ENCODE measurements at regions of chr10 and their contacts with region 1.

Region 1: GRCh38 chr10:63711867-63712716 is 190.9 kb downstream of the REEP3 start:
- DNase-seq: peak; percentile 99
- ATAC-seq: peak; percentile 91
- H3K4me3 ChIP-seq: 0 out of 4 replicates have a peak overlapping the region, but pooled peaks of 1 of the 2 experiments have one; percentile 5
- H3K27ac ChIP-seq: peak overlapping the region; percentile 75
- H3K4me1 ChIP-seq: peaks cover 59 to 75% of the 10 kb centered on the region in 2 experiments
- H3K27me3 ChIP-seq: no peaks in the 10 kb centered on the region
- CTCF ChIP-seq: no peak
- POLR2A ChIP-seq: no peak
- RAD21 ChIP-seq: peak; percentile 36

Region 2: GRCh38 chr10:63166742-63167258 is 545.3 kb before region 1 on chr10:
- CTCF ChIA-PET with region 1: interaction called, 159 read pairs
- POLR2A ChIA-PET with region 1: no interaction called
- RAD21 ChIA-PET with region 1: no interaction called
- intact Hi-C with region 1: no loop called
- DNase-seq: peak; percentile 64
- ATAC-seq: peak; percentile 86
- H3K4me3 ChIP-seq: no peak overlapping the region
- H3K27ac ChIP-seq: no peak overlapping the region
- H3K4me1 ChIP-seq: no peaks in the 10 kb centered on the region
- H3K27me3 ChIP-seq: no peaks in the 10 kb centered on the region
- CTCF ChIP-seq: peak; percentile 71 to 74 (median 74)
- POLR2A ChIP-seq: no peak
- RAD21 ChIP-seq: peak; percentile 79

Region 3: GRCh38 chr10:63217120-63217605 is 494.9 kb before region 1 on chr10:
- CTCF ChIA-PET with region 1: no interaction called
- POLR2A ChIA-PET with region 1: no interaction called
- RAD21 ChIA-PET with region 1: no interaction called
- intact Hi-C with region 1: loop called (anchors 2 kb)
- DNase-seq: peak; percentile 27
- ATAC-seq: peak; percentile 94
- H3K4me3 ChIP-seq: no peak overlapping the region
- H3K27ac ChIP-seq: no peak overlapping the region
- H3K4me1 ChIP-seq: 0 out of 4 replicates have a peak, but pooled peaks cover 0 to 4% of the 10 kb centered on the region in 2 experiments
- H3K27me3 ChIP-seq: no peaks in the 10 kb centered on the region
- CTCF ChIP-seq: peak; percentile 53 to 69 (median 67)
- POLR2A ChIP-seq: no peak
- RAD21 ChIP-seq: peak; percentile 78

Region 4: DNA sequence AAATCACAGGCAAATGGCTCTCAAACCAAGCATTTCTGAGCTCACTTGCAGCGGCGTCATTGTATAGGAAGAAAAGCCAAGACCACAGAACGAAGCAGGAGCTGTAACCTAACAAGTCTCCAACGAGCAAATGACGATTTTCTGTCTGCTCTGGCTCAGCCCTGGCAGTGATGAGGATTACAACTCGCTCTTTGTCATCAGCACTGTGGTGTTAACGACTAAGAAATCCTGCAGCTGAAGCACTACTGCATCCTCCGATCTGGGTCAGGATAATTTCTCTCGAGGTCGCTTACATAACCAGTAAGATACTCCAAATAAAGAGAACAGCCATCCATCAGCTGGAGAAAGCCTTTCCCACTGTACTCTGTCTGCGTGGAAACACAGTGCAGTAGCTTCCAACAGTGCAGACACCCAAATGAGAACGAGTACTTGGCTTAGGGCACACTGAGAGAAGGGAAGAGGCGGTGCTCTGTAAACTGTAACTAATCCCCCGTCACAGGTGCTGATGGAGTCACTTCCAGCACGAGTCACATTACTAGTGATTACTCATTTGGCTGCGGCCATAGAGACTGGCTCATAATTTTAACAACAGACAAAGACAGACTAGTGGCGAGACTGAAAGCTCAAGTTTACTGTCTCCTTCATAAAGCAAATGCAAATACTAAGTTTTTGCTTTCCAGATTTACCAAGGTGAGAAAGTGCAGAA is 443.1 kb before region 1 on chr10:
- CTCF ChIA-PET with region 1: no interaction called
- POLR2A ChIA-PET with region 1: interaction called, 3 read pairs
- RAD21 ChIA-PET with region 1: no interaction called
- intact Hi-C with region 1: loop called (anchors 5 kb)
- DNase-seq: peak; percentile 94
- ATAC-seq: peak; percentile 93
- H3K4me3 ChIP-seq: peak overlapping the region; percentile 60 to 65
- H3K27ac ChIP-seq: peak overlapping the region; percentile 72
- H3K4me1 ChIP-seq: peaks cover 28 to 57% of the 10 kb centered on the region in 2 experiments
- H3K27me3 ChIP-seq: no peaks in the 10 kb centered on the region
- CTCF ChIP-seq: peak in 2 of 3 experiments; percentile 25 to 36; a peak in 3 of 6 replicates
- POLR2A ChIP-seq: peak; percentile 90
- RAD21 ChIP-seq: peak; percentile 33

Region 5: DNA sequence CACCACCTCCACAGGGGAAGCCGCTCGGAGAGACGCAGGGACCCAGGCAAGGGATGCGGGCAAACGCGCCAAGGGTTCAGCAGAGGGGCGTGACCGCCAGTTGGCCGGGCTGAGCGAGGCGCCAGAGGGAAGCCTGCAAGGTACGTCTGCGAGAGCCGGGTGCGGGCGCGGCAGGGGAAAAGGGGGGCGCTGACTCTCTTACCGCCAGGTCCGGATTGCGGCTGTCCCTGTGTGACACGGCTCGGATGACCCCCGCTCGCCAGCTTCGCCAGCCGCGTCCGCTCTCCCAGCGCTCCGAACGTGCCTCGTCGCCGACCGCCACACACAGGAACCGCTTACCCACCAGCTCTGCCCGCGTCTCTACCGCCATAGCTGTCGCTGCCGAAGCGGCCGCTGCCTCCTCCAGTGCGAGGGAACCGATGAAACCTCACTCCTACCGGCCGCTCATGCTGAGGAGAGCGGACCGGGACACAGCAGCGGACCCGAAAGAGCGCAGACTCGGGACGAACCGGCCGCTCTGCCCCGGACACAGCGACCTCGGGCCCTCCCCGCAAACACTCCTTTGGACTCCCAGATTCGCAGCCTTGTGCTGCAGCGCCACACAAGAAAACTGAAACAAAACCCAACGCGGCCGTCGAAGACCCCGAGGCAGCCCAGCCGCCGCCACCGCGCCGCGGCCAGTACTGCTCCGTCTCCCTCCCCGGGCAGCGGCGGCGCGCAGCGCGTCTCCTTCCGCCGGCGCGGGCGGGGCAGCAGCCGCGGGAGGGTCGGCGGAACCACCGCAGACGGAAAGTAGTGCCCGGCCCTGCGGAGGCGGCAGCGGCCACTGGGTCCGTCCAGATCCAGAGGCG is 246.6 kb before region 1 on chr10 and contains the start of gene JMJD1C:
- CTCF ChIA-PET with region 1: no interaction called
- POLR2A ChIA-PET with region 1: no interaction called
- RAD21 ChIA-PET with region 1: no interaction called
- intact Hi-C with region 1: loop called (anchors 10 kb)
- DNase-seq: peak; percentile 72
- ATAC-seq: peak; percentile 82
- H3K4me3 ChIP-seq: peak within 1 kb of the TSS; percentile 78 to 88
- H3K27ac ChIP-seq: peak within 1 kb of the TSS; percentile 79
- H3K4me1 ChIP-seq: peaks cover 10 to 24% of the 10 kb centered on the region in 2 experiments; a peak in 3 of 4 replicates
- H3K27me3 ChIP-seq: no peaks in the 10 kb centered on the region
- CTCF ChIP-seq: no peak
- POLR2A ChIP-seq: peak; percentile 30
- RAD21 ChIP-seq: peak; percentile 26; the same call in 1 of the 2 replicates
- total RNA-seq, gene JMJD1C: 66.3 TPM

Region 6: GRCh38 chr10:63554657-63555056 is 157.4 kb before region 1 on chr10:
- CTCF ChIA-PET with region 1: no interaction called
- POLR2A ChIA-PET with region 1: no interaction called
- RAD21 ChIA-PET with region 1: no interaction called
- intact Hi-C with region 1: loop called (anchors 10 kb)
- DNase-seq: peak; percentile 26
- ATAC-seq: peak; percentile 48
- H3K4me3 ChIP-seq: peak overlapping the region in 1 of 2 experiments; percentile 40; a peak in 2 of 4 replicates
- H3K27ac ChIP-seq: peak overlapping the region; percentile 84
- H3K4me1 ChIP-seq: peaks cover 41 to 53% of the 10 kb centered on the region in 2 experiments
- H3K27me3 ChIP-seq: no peaks in the 10 kb centered on the region
- CTCF ChIP-seq: no peak
- POLR2A ChIP-seq: no peak
- RAD21 ChIP-seq: no peak

Region 7: GRCh38 chr10:63700209-63700613 is 11.9 kb before region 1 on chr10:
- CTCF ChIA-PET with region 1: no interaction called
- POLR2A ChIA-PET with region 1: interaction called, 25 read pairs
- RAD21 ChIA-PET with region 1: no interaction called
- intact Hi-C with region 1: no loop called
- DNase-seq: peak; percentile 85
- ATAC-seq: peak; percentile 90
- H3K4me3 ChIP-seq: peak overlapping the region in 1 of 2 experiments; percentile 27; a peak in 2 of 4 replicates
- H3K27ac ChIP-seq: peak overlapping the region; percentile 77
- H3K4me1 ChIP-seq: peaks cover 65 to 92% of the 10 kb centered on the region in 2 experiments
- H3K27me3 ChIP-seq: no peaks in the 10 kb centered on the region
- CTCF ChIP-seq: no peak
- POLR2A ChIP-seq: no peak
- RAD21 ChIP-seq: no peak; the same call in 1 of the 2 replicates

Measured in HCT116 (cell line).